WTC11 (cell line): ENCODE measurements at regions of chr20 and their contacts with region 1.

Region 1: DNA sequence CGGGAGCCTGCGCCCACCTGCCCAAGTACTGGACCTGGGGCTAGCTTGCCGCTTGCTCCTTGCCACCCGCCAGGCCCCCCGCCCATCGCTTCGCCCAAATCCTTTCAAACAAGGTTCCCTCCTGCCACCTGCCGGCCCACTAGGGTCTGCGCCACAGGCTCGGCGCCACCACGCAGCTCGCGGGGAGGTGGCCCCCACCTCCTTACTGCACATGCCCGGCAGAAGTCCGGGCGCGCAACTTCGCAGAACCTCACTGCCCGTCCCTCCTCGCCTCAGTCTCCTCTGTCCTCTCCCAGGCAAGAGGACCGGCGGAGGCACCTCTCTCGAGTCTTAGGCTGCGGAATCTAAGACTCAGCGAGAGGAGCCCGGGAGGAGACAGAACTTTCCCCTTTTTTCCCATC is 11.2 kb downstream of the GNAS-AS1 start:
- DNase-seq: peak; percentile 75
- ATAC-seq: peak; percentile 33
- H3K4me3 Mint-ChIP-seq: peak overlapping the region; percentile 91
- H3K27ac Mint-ChIP-seq: peak overlapping the region; percentile 90; the same call in 1 of the 2 replicates
- H3K4me1 Mint-ChIP-seq: peaks cover 75% of the 10 kb centered on the region
- H3K27me3 Mint-ChIP-seq: peaks cover 17% of the 10 kb centered on the region
- CTCF ChIP-seq: peak; percentile 30; the same call in 1 of the 2 replicates

Region 2: DNA sequence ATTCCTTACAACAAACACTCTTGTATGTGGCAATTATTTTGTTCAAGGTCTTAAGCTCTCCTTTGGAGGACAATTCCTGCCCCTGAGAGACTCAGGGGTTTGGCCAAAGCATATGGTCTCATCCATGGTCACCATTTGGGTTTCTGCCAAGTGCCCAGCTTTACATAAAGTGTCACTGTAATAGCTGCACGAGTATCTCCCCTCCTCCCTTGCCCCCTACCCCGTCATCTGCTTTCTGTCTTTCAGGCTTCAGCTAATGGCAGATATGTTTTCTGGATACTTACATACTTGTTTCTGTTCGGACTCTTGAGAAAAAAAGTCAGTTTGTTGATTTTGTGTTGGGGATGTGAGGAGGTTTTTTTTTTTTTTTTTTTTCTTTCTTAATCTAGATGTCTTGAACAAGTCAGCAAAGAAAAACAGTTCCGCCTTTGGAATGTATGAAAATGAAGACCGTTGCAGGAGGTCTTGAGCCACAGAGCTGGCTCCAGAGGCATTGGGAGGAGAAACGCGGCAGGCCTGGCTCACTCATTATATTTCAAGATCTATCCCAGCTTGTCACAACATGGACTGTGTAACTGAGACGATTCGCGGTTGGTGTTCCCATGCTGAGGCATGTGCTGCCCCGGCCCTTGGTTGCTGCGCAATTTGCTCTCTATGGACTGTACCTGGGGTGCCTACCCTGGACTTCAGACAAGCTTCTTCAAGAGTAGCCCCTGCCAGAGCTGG is 221.0 kb before region 1 on chr20:
- CTCF ChIA-PET with region 1: interaction called, 6 read pairs
- POLR2A ChIA-PET with region 1: interaction called, 12 read pairs
- DNase-seq: no peak
- ATAC-seq: no peak
- H3K4me3 Mint-ChIP-seq: no peak overlapping the region
- H3K27ac Mint-ChIP-seq: no peak overlapping the region
- H3K4me1 Mint-ChIP-seq: peaks cover 21% of the 10 kb centered on the region
- H3K27me3 Mint-ChIP-seq: peaks cover 45% of the 10 kb centered on the region
- CTCF ChIP-seq: no peak

Region 3: DNA sequence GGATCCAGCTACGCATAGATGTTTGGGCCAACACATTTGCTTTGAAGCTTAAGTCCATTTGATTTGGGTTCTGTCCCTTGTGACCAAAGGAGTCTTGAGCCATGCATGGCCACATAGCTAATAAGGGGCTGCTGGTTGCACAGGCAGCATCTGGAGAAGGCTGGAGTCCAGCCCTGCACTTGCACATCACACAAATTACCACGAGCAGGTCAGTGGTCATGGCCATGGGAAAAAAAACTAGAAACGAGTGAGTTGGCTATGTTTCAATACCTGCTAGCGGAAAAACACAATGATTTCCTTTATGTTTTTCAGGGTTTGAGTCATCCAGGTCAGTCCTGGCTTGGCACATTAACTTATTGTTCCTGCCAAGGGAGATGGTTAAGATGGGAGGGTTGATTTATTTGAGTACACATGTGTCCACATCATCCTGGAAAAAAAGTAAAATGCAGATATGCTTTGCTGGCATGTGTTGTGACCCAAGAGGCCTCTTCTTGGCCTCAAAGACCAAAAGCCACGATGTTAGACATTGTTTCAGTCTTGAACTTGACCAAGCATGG is 194.0 kb before region 1 on chr20:
- CTCF ChIA-PET with region 1: interaction called, 58 read pairs
- POLR2A ChIA-PET with region 1: interaction called, 25 read pairs
- DNase-seq: no peak
- ATAC-seq: no peak
- H3K4me3 Mint-ChIP-seq: no peak overlapping the region
- H3K27ac Mint-ChIP-seq: no peak overlapping the region
- H3K4me1 Mint-ChIP-seq: peaks cover 15% of the 10 kb centered on the region
- H3K27me3 Mint-ChIP-seq: no peaks in the 10 kb centered on the region
- CTCF ChIP-seq: no peak

Region 4: DNA sequence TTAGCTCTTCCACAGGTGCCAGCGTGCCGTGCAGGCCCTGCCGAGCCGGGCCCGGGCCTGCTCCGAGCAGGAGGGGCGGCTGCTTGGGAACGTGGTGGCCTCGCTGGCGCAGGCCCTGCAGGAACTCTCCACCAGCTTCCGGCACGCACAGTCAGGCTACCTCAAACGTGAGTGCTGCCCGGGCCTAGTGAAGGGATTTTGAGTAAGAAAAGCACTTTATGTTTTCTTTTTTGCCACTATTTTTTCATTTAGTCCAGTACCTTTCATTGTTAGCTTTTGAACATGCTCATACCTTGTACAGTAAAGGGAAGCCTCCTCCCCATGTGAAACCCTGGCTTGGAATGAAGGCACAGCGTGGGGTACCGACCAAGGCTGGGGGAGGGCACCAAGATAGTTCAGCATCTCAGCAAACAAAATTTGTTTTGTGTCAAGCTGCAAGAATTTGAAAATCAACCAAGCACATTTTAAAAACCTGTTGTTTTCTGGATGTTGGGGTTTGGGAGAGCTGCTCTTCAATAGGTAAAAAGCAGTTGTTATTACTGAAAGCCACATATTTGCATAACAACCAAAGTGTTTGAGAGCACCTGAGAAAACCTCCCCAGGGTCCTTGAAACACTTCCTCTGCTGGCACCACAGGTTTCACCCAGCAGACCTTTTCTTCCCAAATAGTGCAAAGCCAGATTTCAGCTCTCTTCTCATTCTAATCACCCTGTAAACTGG is 170.0 kb before region 1 on chr20:
- CTCF ChIA-PET with region 1: interaction called, 11 read pairs
- POLR2A ChIA-PET with region 1: no interaction called
- DNase-seq: peak; percentile 73
- ATAC-seq: peak; percentile 78
- H3K4me3 Mint-ChIP-seq: peak overlapping the region; percentile 49
- H3K27ac Mint-ChIP-seq: peak overlapping the region; percentile 100
- H3K4me1 Mint-ChIP-seq: peaks cover 81% of the 10 kb centered on the region
- H3K27me3 Mint-ChIP-seq: no peaks in the 10 kb centered on the region
- CTCF ChIP-seq: no peak

Region 5: GRCh38 chr20:58810116-58810878 is 29.2 kb before region 1 on chr20:
- CTCF ChIA-PET with region 1: no interaction called
- POLR2A ChIA-PET with region 1: no interaction called
- DNase-seq: no peak
- ATAC-seq: no peak
- H3K4me3 Mint-ChIP-seq: no peak overlapping the region
- H3K27ac Mint-ChIP-seq: no peak overlapping the region
- H3K4me1 Mint-ChIP-seq: peaks cover 30% of the 10 kb centered on the region
- H3K27me3 Mint-ChIP-seq: peaks cover 4% of the 10 kb centered on the region
- CTCF ChIP-seq: no peak

Region 6: GRCh38 chr20:58850693-58851174 is 11.3 kb after region 1 on chr20 and contains the start of gene GNAS-AS1:
- CTCF ChIA-PET with region 1: interaction called, 34 read pairs
- POLR2A ChIA-PET with region 1: interaction called, 14 read pairs
- DNase-seq: peak; percentile 95
- ATAC-seq: peak; percentile 60
- H3K4me3 Mint-ChIP-seq: peak within 1 kb of the TSS; percentile 74
- H3K27ac Mint-ChIP-seq: peak within 1 kb of the TSS; percentile 94
- H3K4me1 Mint-ChIP-seq: peaks cover 72% of the 10 kb centered on the region
- H3K27me3 Mint-ChIP-seq: peaks cover 48% of the 10 kb centered on the region
- CTCF ChIP-seq: no peak; the same call in 1 of the 2 replicates
- total RNA-seq, gene GNAS-AS1: 12.2 to 13.4 TPM (median 12.8 TPM) in 3 replicates

Region 7: GRCh38 chr20:58870239-58871014 is 31.0 kb after region 1 on chr20:
- CTCF ChIA-PET with region 1: interaction called, 15 read pairs
- POLR2A ChIA-PET with region 1: no interaction called
- DNase-seq: peak; percentile 83
- ATAC-seq: peak; percentile 91
- H3K4me3 Mint-ChIP-seq: no peak overlapping the region
- H3K27ac Mint-ChIP-seq: no peak overlapping the region
- H3K4me1 Mint-ChIP-seq: peaks cover 32% of the 10 kb centered on the region
- H3K27me3 Mint-ChIP-seq: no peaks in the 10 kb centered on the region
- CTCF ChIP-seq: peak; percentile 76

Region 8: GRCh38 chr20:58911970-58912369 is 72.5 kb after region 1 on chr20:
- CTCF ChIA-PET with region 1: no interaction called
- POLR2A ChIA-PET with region 1: no interaction called
- DNase-seq: no peak
- ATAC-seq: no peak
- H3K4me3 Mint-ChIP-seq: no peak overlapping the region
- H3K27ac Mint-ChIP-seq: no peak overlapping the region
- H3K4me1 Mint-ChIP-seq: no peaks in the 10 kb centered on the region
- H3K27me3 Mint-ChIP-seq: no peaks in the 10 kb centered on the region
- CTCF ChIP-seq: no peak